CD14-positive monocyte (primary cell): ENCODE measurements at regions of chr2 and their contacts with region 1.

Region 1: GRCh38 chr2:235055891-235056516 is 104.2 kb downstream of the SH3BP4 start:
- DNase-seq: peak; percentile 9 to 49 (median 46)
- H3K4me3 ChIP-seq: no peak overlapping the region
- H3K4me3 Mint-ChIP-seq: no peak overlapping the region
- H3K27ac ChIP-seq: no peak overlapping the region
- H3K27ac Mint-ChIP-seq: peak overlapping the region in 4 of 7 donors; percentile 3 to 76 (median 32)
- H3K4me1 ChIP-seq: peaks cover 27 to 31% of the 10 kb centered on the region in 2 donors
- H3K4me1 Mint-ChIP-seq: peaks cover 34% of the 10 kb centered on the region
- H3K27me3 ChIP-seq: no peaks in the 10 kb centered on the region
- H3K27me3 Mint-ChIP-seq: peaks cover 1 to 5% (median 3%) of the 10 kb centered on the region in 3 donors
- CTCF ChIP-seq: peak; percentile 62

Region 2: DNA sequence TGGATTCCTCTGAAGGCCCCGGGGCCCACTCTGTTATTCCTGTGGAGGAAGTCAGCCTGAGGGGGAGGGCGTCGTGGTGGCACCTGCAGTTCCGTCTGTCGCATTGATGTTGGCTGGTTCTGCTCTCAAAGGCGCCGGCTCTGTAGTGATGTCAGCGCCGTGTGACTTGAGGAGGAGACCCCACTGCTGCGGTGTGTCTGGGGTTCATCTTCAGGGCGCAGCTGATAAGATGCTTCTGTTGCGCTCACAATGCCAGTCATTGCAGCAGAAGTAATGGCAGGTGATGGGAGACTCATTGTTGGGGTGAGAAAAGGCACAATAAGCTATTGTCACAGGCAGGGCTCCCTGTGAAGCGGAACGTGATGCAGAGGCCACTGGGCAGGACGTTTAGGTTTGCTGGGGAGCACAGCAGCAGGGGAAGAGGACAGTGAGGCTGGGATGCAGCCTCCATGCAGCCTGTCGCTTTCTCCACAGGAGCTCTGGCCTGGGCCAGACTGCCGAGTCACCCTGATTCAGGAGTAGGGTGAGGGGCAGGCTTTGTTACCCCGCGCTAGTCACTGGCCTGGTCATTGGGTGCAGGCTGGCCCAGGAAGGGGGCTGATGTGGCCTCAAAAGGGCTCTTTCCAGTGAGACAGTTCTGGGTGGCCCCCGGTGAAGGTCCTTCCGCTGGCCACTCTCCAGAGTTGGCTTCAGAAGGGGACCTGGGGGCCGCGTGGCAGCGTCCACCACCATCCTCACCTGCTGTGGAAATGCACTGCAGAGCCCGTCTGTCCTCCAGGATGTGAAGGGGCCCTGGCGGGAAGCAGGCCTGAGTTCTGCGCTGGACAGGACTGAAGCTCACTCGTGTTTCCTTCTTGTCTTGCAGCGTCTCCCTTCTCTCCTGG is 61.3 kb before region 1 on chr2:
- intact Hi-C with region 1: loop called in 1 of 2 experiments (anchors 5 kb)
- DNase-seq: peak in 1 of 3 donors; percentile 12
- H3K4me3 ChIP-seq: peak overlapping the region in 1 of 3 experiments; percentile 42
- H3K4me3 Mint-ChIP-seq: peak overlapping the region in 1 of 2 donors; percentile 77
- H3K27ac ChIP-seq: no peak overlapping the region
- H3K27ac Mint-ChIP-seq: peak overlapping the region in 1 of 7 donors; percentile 74
- H3K4me1 ChIP-seq: peaks cover 43 to 49% of the 10 kb centered on the region in 2 donors
- H3K4me1 Mint-ChIP-seq: peaks cover 61% of the 10 kb centered on the region
- H3K27me3 ChIP-seq: no peaks in the 10 kb centered on the region
- H3K27me3 Mint-ChIP-seq: peaks cover 12 to 17% (median 15%) of the 10 kb centered on the region in 3 donors
- CTCF ChIP-seq: no peak